GM12878 (cell line): ENCODE measurements at regions of chr14 and their contacts with region 1.

Region 1: GRCh38 chr14:67373347-67373746 is 13.2 kb downstream of the EIF2S1 start:
- DNase-seq: peak; percentile 15
- ATAC-seq: peak; percentile 91
- H3K4me3 ChIP-seq: no peak overlapping the region
- H3K27ac ChIP-seq: no peak overlapping the region; the same call in 1 of the 2 replicates
- H3K4me1 ChIP-seq: no peaks in the 10 kb centered on the region
- H3K27me3 ChIP-seq: no peaks in the 10 kb centered on the region
- CTCF ChIP-seq: no peak
- EP300 ChIP-seq: no peak
- POLR2A ChIP-seq: no peak
- RAD21 ChIP-seq: no peak

Region 2: GRCh38 chr14:67359775-67360648 is 13.3 kb before region 1 on chr14 and contains the starts of genes ATP6V1D and EIF2S1:
- CTCF ChIA-PET with region 1: interaction called, 16 read pairs
- POLR2A ChIA-PET with region 1: interaction called, 8 read pairs
- RAD21 ChIA-PET with region 1: interaction called, 3 read pairs
- SMC1A ChIA-PET with region 1: interaction called, 6 read pairs
- in situ Hi-C with region 1: no loop called
- intact Hi-C with region 1: no loop called
- DNase-seq: peak; percentile 98
- ATAC-seq: peak; percentile 91
- H3K4me3 ChIP-seq: peak within 1 kb of the TSS; percentile 91
- H3K27ac ChIP-seq: peak within 1 kb of the TSS; percentile 98
- H3K4me1 ChIP-seq: peaks cover 4% of the 10 kb centered on the region; the same call in 1 of the 2 replicates
- H3K27me3 ChIP-seq: no peaks in the 10 kb centered on the region
- CTCF ChIP-seq: peak; percentile 94 to 100 (median 96); a peak in 5 of 6 replicates
- EP300 ChIP-seq: no peak
- POLR2A ChIP-seq: peak; percentile 88
- RAD21 ChIP-seq: peak; percentile 35
- polyA plus RNA-seq, gene ATP6V1D: 49.9 to 71.6 TPM
- polyA plus RNA-seq, gene EIF2S1: 526 to 563 TPM